Motor neuron (in vitro differentiated cells): ENCODE measurements at regions of chr13 and their contacts with region 1.

Region 1: DNA sequence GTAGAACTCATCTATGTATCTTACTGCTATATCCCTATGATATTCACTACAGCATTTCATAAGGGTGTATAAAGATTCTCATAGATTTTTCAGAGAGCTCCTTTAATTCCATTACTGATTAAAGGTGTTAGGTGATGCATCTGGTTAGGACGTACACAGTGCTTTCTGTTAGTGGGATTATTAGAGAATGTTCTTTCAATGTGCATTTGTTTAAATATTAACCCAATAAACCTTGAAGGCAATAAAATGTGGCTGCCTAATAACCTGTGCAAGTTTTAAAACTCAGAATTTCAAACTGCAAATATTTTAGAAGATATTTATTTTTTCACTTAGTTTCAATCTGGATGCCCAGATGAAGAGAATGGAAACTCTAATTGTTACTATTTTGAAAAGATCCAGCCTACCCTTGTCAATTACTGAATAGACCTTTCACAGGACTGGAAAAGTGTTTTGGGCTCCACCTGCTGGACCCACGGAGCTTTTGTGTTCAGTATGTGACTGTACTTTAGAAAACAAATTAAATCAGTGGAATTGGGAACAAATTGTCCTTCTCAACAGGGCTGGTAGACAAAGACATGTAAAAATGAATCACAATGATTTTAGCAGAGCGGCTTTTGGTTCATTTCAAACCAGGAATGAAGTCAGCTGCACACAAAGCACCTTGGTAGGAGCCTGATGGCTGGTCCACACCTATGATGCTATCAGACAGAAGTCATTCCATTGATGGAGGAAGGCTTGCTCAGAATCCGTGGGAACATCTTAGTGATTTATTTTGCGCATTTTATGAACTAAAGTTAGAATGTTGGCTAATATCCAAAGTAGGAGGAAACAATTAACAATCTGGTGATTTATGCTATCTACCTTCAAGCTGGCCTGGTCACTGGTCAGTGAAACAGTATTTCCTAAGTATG is 89.4 kb upstream of the RAP2A start:
- ATAC-seq: peak; percentile 34 to 87 (median 74)
- H3K4me3 ChIP-seq: no peak overlapping the region
- H3K27ac ChIP-seq: no peak overlapping the region
- H3K4me1 ChIP-seq: peaks cover 14% of the 10 kb centered on the region in 2 donors

Region 2: DNA sequence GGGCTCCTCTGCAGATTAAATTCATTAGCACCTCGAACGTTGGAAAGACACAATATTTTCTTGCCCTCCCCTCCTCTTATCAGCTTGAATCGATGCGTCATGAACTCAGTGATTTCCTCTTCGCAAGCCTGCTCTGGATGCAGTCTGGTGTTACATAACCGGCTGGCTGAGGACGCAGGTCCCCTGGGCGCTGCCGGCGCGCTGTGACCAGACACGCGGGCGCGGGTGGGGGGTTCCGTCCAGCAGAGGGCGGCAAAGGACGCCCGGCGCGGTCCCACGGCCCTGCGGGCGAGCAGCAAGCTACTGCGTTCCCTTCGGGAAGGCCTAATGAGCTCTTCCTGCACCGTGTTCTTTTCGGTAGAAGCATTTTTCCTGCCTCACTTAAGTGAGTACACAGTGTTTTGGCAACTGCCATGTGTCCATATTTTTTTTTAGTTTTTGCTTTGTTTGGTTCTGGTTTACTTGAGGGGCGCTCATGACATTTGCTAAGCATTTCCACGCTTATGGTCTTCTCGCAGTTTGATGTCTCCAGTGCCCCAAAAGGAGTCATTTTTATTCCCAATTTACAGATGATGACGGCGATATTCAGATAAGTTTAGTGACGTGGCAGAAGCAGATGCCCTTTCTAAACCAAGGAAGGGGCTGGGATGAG is 234.6 kb before region 1 on chr13:
- in situ Hi-C with region 1: loop called in 2 of 9 experiments (anchors 25 kb)
- ATAC-seq: peak; percentile 91 to 99 (median 95)
- H3K4me3 ChIP-seq: no peak overlapping the region
- H3K27ac ChIP-seq: no peak overlapping the region
- H3K4me1 ChIP-seq: peaks cover 22 to 47% of the 10 kb centered on the region in 2 donors

Region 3: DNA sequence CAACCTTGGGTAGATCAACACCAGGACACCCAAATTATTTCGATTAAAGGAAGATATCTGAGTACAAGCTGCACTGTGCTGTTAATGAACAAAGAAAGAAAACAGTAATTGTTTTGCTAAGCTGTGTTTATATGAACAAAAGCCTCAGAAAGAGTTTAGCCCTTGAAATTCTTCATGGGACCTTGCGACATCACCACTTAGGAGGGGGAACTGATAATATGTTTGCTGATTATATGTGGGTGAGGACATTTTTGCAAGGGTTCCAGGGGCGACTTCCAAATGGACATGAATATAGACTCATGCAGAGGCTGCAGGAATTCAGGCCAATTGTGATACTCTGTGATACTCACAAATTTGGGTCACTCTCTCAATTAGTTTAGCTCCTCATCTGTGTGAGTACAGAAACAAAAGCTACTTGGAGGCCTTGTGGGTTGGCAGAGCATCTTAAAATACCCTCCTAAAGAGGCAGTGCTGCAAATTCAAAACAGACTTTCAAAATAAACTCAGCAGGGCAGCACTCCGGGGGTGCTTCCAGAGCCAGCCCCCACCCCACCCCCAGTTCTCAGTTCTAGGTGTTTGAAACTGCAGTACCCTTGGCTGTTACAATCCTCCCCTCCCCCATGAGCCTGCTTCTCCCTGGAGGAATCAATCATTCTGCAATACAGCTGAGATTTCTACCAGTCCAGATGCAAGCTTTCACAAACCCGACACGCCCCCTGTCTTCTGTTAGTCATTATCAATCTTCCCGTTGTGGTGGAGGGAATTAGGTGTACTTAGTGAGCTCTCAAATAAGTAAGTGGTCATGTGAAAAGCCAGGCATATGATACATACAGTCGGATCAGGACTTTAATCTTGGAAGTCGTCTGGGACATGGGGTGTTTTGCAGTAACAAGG is 219.4 kb before region 1 on chr13:
- in situ Hi-C with region 1: loop called in 3 of 9 experiments (anchors 10 to 25 kb)
- ATAC-seq: peak; percentile 61 to 92 (median 88)
- H3K4me3 ChIP-seq: no peak overlapping the region
- H3K27ac ChIP-seq: peak overlapping the region in 1 of 2 donors; percentile 36
- H3K4me1 ChIP-seq: peaks cover 33 to 35% of the 10 kb centered on the region in 2 donors

Region 4: DNA sequence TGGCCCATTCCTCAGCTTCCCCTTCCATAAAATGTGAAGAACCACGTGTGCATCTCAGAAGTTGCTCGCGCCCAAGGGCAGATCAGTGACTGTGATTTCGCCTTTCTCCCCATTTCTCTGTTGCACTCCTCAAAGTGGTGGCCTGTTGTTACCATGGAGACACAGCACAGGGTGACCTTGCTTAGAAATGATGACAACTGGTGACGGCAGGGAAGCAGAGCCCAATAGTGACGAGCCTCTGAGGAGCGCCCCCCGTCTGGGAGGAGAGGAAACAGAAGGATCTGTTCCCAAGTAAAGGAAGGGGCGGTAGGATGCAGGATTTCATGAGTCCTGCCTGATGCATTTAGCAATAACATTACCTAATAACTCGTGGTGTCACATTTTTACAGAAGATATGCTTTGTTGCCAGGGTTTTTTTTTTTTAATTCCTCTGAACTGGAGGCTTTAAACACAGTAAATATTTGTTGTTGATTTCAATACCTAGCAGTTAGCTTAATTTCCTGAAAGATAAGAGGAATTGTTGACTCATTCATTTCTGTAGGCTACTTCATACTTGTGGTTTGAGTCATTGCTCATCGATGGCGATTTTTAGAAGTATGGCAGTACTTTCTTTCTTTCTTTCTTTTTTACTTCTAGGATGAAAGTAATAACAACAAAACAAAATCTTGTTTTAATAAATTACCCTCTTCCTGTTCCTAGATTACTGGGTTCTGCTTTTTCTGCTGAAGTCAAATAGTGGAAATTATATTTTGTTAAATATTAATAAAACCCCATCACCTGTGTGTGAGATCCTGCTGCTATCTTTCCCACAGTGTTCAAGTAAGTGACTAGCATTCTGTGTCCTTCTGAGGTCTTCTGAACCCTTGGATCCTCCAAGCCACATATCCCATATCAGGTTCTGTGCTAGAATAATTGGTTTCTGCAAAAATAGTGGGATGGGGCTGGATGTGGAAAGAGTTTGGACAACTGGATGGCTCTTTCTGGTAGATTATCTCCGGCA is 86.4 kb before region 1 on chr13:
- in situ Hi-C with region 1: no loop called
- ATAC-seq: peak; percentile 9 to 66 (median 32)
- H3K4me3 ChIP-seq: no peak overlapping the region
- H3K27ac ChIP-seq: no peak overlapping the region
- H3K4me1 ChIP-seq: peaks cover 27 to 40% of the 10 kb centered on the region in 2 donors